ENCODE measurements at regions of chr19 and their contacts with region 1.

Region 1: GRCh38 chr19:18281082-18282020 is at the start of gene JUND:
- DNase-seq: peak; percentile 99
- ATAC-seq: peak; percentile 84
- total RNA-seq, gene JUND: 107 TPM

Region 2: GRCh38 chr19:18322759-18323460 is 41.6 kb after region 1 on chr19 and contains the start of gene LSM4:
- intact Hi-C with region 1: loop called (anchors 1 kb)
- DNase-seq: peak; percentile 99
- ATAC-seq: peak; percentile 97
- total RNA-seq, gene LSM4: 103 TPM

Region 3: DNA sequence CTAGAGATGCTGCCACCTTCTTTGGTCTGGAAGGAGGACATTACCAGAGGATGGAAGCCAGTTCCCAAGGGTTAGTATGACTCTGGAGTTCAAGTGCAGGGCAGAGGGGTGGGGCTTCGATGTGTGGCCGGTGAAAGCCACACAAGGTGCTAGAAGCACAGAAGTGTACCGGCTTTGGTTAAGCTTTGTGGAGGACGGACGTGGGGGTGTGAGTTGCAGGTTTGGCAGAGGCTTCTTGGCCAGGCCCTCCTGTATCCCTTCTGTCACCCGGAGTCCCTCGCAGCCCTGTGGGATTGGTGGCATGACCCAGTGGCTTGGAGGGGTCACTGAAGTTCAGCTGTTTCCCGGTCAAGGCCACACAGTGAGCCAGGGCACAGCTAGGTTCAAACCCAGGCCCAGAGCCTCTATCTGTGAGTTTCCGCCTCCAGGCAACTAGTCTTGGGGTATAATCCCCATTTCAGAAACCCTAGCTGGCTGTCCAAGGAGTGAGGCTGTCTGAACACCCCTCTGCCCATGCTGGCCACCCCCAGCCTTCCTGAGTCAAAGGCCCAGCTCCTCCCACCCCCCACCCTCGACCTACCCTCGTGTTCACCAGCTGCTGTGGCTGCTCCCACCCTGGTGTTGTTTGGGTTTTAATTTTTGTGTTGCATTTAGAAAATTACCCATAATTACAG is 133.3 kb after region 1 on chr19:
- intact Hi-C with region 1: loop called (anchors 5 kb)
- DNase-seq: peak; percentile 60
- ATAC-seq: no peak

Measured in Right ventricle myocardium superior (tissue), 1 donor.